Lower leg skin (tissue), 4 donors: ENCODE measurements at regions of chr2 and their contacts with region 1.

Region 1: GRCh38 chr2:189412330-189412953 is 28.8 kb upstream of the WDR75 start:
- DNase-seq: no peak
- H3K4me3 ChIP-seq: no peak overlapping the region
- CTCF ChIP-seq: peak in 1 of 3 donors; percentile 75
- POLR2A ChIP-seq: no peak

Region 2: DNA sequence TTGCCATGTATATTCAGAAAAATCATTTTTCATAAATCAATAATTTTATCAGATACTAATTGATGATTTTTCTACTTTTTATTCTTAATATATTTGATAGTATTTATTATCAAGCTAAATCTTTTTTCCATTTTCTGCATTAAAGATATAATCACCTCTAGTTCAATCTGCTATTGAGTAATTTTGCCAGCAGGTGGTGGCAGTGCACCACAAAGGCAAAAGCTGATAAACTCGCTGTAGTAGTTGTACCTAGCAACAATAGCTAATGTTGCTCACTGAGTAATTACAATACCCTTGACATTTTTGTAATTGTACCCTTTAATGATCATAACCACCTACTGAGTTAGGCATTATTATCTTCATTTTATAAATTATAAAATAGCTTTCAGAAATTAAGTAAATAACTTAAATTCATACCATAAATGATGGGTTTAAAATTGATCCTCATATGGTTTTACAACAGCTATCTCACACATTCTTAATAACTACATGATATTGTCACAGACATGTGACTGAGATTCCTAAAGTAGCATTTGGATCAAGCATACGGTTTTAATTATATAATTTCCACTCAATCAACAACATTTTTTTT is 1912.4 kb before region 1 on chr2:
- intact Hi-C with region 1: loop called (anchors 5 kb)
- DNase-seq: peak; percentile 60 to 87
- H3K4me3 ChIP-seq: no peak overlapping the region
- CTCF ChIP-seq: peak in 1 of 3 donors; percentile 60
- POLR2A ChIP-seq: no peak

Region 3: GRCh38 chr2:189096769-189097447 is 315.5 kb before region 1 on chr2:
- intact Hi-C with region 1: loop called (anchors 10 kb)
- DNase-seq: no peak
- H3K4me3 ChIP-seq: no peak overlapping the region
- CTCF ChIP-seq: no peak
- POLR2A ChIP-seq: no peak